Activated CD4-positive, alpha-beta memory T cell treated with anti-CD3 and anti-CD28 coated beads for 36 hours (primary cell): ENCODE measurements at regions of chrX and their contacts with region 1.

Region 1: DNA sequence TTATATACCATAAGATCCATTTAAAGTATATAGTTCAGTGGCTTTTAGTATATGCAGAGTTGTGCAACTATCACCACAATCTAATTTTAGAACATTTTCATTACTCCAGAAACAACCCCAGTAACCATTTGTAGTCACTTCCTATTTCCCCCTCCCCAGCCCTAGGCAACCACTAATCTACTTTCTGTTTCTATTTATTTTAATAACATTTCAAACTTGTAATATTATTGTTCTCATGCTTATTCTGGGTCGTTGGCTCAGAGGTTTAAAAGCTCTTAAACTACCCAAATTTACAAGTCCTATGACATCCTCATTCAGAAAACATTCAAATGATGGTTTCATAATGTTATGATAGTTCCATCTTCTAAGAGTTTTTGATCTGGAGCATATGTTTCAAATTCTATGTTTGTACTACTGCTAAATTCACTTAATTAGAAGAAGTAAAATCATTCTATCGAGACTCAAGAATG is 18.4 kb downstream of the XIAP start:
- DNase-seq: no peak
- H3K4me3 Mint-ChIP-seq: no peak overlapping the region
- H3K27ac Mint-ChIP-seq: peak overlapping the region; percentile 58
- H3K4me1 Mint-ChIP-seq: peaks cover 22% of the 10 kb centered on the region
- H3K27me3 Mint-ChIP-seq: no peaks in the 10 kb centered on the region

Region 2: GRCh38 chrX:123854329-123854728 is 24.0 kb before region 1 on chrX:
- CTCF ChIA-PET with region 1: no interaction called
- POLR2A ChIA-PET with region 1: no interaction called
- intact Hi-C with region 1: loop called (anchors 1 kb)
- DNase-seq: peak; percentile 40
- H3K4me3 Mint-ChIP-seq: no peak overlapping the region
- H3K27ac Mint-ChIP-seq: peak overlapping the region; percentile 55
- H3K4me1 Mint-ChIP-seq: peaks cover 18% of the 10 kb centered on the region
- H3K27me3 Mint-ChIP-seq: no peaks in the 10 kb centered on the region

Region 3: GRCh38 chrX:123859846-123860838 is 18.1 kb before region 1 on chrX and contains the start of gene XIAP:
- CTCF ChIA-PET with region 1: no interaction called
- POLR2A ChIA-PET with region 1: interaction called, 3 read pairs
- intact Hi-C with region 1: loop called (anchors 2 kb)
- DNase-seq: peak; percentile 81
- H3K4me3 Mint-ChIP-seq: peak within 1 kb of the TSS; percentile 84
- H3K27ac Mint-ChIP-seq: peak within 1 kb of the TSS; percentile 93
- H3K4me1 Mint-ChIP-seq: peaks cover 19% of the 10 kb centered on the region
- H3K27me3 Mint-ChIP-seq: no peaks in the 10 kb centered on the region
- total RNA-seq, gene XIAP: 33.9 to 36.1 TPM

Region 4: DNA sequence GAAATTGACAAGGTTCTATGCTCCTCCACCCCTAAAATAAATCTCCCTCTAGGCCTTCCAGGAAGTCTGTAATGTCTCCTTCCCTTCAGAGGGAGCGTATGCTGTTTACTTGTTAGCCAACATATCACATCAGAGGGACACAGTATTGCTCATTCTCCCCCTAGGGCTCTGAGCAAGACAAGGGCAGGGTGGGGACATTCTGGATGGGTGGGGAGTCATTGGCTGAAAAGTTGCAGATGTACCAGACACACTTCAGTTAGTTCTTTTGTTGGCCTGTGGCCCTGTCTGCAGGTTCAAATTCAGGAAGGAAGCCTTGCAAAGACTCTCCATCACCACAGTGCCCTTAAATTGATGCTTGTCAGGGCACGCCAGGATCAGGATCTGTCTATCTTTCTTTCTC is 347.8 kb after region 1 on chrX:
- CTCF ChIA-PET with region 1: no interaction called
- POLR2A ChIA-PET with region 1: no interaction called
- intact Hi-C with region 1: no loop called
- DNase-seq: no peak
- H3K4me3 Mint-ChIP-seq: no peak overlapping the region
- H3K27ac Mint-ChIP-seq: no peak overlapping the region
- H3K4me1 Mint-ChIP-seq: peaks cover 19% of the 10 kb centered on the region
- H3K27me3 Mint-ChIP-seq: no peaks in the 10 kb centered on the region